H1 (cell line): ENCODE measurements at regions of chr11 and their contacts with region 1.

Region 1: DNA sequence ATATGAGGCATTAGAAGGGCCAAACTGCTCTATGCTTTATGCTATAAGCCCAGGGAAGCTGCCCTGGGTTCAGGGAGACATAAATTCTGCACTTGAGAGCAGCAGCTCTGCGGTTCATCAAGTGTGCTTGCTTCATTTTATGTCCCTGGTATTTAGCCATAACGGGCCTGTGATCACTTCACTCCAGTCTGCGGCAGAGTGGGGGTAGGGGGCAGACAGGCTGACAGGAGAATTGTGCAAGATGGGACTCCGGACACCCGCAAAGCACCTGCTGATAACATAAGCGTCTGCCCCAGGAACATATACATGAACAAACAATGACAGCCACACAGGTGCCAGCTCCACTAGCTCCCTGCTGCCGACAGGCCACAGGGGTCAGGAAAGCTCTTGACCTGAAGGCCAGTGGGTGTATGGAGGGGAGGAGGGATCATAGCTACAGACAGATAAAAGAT is 56.1 kb downstream of the SMCO4 start:
- DNase-seq: no peak
- H3K4me3 ChIP-seq: no peak overlapping the region
- H3K27ac ChIP-seq: no peak overlapping the region
- H3K4me1 ChIP-seq: peaks cover 18 to 46% (median 31%) of the 10 kb centered on the region in 4 experiments
- H3K27me3 ChIP-seq: no peaks in the 10 kb centered on the region
- CTCF ChIP-seq: no peak
- EP300 ChIP-seq: no peak
- POLR2A ChIP-seq: no peak
- RAD21 ChIP-seq: no peak

Region 2: GRCh38 chr11:93476796-93477195 is 10.3 kb before region 1 on chr11:
- CTCF ChIA-PET with region 1: interaction called, 9 read pairs
- POLR2A ChIA-PET with region 1: interaction called, 32 read pairs
- DNase-seq: no peak
- H3K4me3 ChIP-seq: no peak overlapping the region
- H3K27ac ChIP-seq: no peak overlapping the region
- H3K4me1 ChIP-seq: peaks cover 10 to 23% (median 20%) of the 10 kb centered on the region in 4 experiments
- H3K27me3 ChIP-seq: no peaks in the 10 kb centered on the region
- CTCF ChIP-seq: no peak
- EP300 ChIP-seq: no peak
- POLR2A ChIP-seq: no peak
- RAD21 ChIP-seq: no peak